ENCODE measurements at regions of chr1 and their contacts with region 1.

Region 1: GRCh38 chr1:78004719-78005447 is at the start of gene DNAJB4:
- DNase-seq: peak; percentile 95
- ATAC-seq: peak; percentile 99
- H3K4me3 ChIP-seq: peak within 1 kb of the TSS; percentile 60 to 71 (median 62); a peak in 5 of 6 replicates
- H3K27ac ChIP-seq: peak within 1 kb of the TSS; percentile 97
- H3K4me1 ChIP-seq: peaks cover 60% of the 10 kb centered on the region
- H3K27me3 ChIP-seq: no peaks in the 10 kb centered on the region
- CTCF ChIP-seq: no peak
- EP300 ChIP-seq: peak in 1 of 2 experiments; percentile 29; a peak in 1 of 4 replicates
- POLR2A ChIP-seq: peak in 1 of 2 experiments; percentile 63; a peak in 2 of 4 replicates
- RAD21 ChIP-seq: no peak
- total RNA-seq, gene DNAJB4: 18.6 and 25.7 TPM in 2 replicates

Region 2: DNA sequence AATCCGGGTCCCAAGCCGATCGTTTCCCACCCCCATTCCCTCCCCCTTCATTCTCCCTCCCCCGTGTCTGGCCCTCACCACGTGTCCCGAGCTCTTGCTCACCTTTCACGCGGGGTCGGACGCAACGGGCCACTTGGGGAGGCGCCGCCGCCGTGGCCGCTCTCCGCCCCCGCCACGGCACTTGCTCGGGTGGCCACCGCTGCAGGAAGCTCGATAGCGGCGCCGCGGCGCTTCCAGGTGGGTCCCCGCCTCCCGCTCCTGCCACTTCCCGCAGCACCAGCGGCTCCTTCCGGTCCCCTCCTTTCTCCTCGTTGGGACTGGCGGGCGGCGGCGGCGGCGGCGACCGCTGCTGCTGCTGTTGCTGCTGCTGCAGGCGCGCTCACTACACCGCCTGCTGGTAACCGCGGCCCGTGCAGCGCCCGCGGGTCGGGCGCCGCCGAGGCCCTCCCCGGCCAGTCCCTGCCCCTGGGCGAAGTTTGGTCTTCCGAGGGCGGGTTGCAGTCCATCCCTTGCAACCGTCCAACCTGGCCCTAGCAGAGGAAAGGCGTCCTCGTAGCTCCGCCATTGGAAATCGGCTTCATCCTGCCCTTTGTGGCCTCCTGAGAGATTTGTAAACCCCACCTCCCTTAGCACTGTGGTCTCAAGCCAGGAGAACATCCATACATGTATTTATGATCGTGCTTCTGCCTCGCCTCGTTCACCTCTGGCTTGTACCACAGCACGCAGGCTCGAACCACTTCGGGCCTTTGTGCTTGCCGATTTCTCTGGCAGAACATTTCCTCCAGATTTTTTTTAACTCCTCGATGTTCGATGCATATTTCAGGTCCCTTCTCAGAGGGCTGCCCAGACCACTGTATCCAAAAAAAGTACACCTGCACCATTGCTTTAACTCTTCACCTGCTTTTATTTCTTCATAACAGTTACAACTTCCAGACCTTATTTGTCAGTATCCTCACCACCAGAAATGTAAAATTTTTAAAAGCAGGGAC is 321.4 kb before region 1 on chr1:
- CTCF ChIA-PET with region 1: no interaction called
- POLR2A ChIA-PET with region 1: interaction called, 10 read pairs
- in situ Hi-C with region 1: no loop called
- intact Hi-C with region 1: no loop called
- DNase-seq: peak; percentile 85
- ATAC-seq: peak; percentile 89
- H3K4me3 ChIP-seq: peak overlapping the region; percentile 86 to 98 (median 90)
- H3K27ac ChIP-seq: peak overlapping the region; percentile 100
- H3K4me1 ChIP-seq: peaks cover 38% of the 10 kb centered on the region
- H3K27me3 ChIP-seq: no peaks in the 10 kb centered on the region; a peak in 1 of 5 replicates
- CTCF ChIP-seq: peak; percentile 89
- EP300 ChIP-seq: no peak; a peak in 1 of 4 replicates
- POLR2A ChIP-seq: peak; percentile 73 to 78
- RAD21 ChIP-seq: peak; percentile 94

Region 3: DNA sequence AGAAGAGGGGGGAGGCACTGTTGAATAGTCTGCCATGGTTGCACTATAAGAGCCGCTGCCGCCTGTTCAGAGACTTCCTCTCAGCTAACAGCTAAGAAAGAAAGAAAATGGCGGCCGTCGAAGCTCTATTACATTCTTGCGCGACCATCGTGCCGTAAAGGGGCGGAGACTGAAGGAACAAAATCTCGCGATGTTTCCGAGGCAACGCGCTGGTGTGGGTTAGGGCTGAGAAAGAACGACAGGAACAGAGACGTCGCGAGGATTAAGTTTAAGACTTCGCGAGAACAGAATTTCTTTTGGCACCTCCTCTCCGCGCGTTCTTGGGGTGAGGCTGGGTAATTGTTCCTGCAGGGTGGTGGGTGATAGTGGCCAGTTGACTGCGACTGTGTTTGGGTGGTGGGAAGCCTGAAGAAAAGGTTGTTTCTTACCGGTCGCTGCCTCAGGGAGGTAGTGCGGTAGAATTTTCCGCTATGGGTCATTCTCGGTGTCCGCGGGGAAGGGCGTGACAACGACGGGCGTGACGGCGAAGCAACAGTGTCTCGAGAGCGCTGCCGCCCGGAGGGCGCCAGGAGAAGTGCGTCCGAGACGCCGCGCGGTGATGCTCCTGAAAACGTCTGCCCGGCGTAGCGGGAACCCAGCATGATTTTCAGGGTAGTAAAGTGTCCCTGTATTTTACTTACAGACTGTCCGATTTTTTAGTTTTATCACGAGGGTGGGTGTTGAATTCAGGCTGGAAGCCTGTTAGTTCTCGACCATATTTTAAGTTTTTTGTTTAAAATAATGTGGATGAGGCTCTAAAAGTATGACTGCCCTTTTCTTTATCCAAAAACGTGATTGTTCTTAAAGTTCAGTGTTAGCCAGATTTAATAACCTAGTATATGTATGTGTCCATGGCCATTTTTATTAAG is 25.7 kb before region 1 on chr1 and contains the start of gene FUBP1:
- CTCF ChIA-PET with region 1: no interaction called
- POLR2A ChIA-PET with region 1: interaction called, 161 read pairs
- in situ Hi-C with region 1: no loop called
- intact Hi-C with region 1: loop called (anchors 1 kb)
- DNase-seq: peak; percentile 98
- ATAC-seq: peak; percentile 91
- H3K4me3 ChIP-seq: peak within 1 kb of the TSS; percentile 79 to 100 (median 90)
- H3K27ac ChIP-seq: peak within 1 kb of the TSS; percentile 99
- H3K4me1 ChIP-seq: peaks cover 61% of the 10 kb centered on the region
- H3K27me3 ChIP-seq: no peaks in the 10 kb centered on the region; a peak in 1 of 5 replicates
- CTCF ChIP-seq: peak; percentile 80
- EP300 ChIP-seq: no peak; a peak in 2 of 4 replicates
- POLR2A ChIP-seq: peak; percentile 89 to 99
- RAD21 ChIP-seq: peak; percentile 29; the same call in 1 of the 2 replicates
- total RNA-seq, gene FUBP1: 166 and 192 TPM in 2 replicates

Region 4: DNA sequence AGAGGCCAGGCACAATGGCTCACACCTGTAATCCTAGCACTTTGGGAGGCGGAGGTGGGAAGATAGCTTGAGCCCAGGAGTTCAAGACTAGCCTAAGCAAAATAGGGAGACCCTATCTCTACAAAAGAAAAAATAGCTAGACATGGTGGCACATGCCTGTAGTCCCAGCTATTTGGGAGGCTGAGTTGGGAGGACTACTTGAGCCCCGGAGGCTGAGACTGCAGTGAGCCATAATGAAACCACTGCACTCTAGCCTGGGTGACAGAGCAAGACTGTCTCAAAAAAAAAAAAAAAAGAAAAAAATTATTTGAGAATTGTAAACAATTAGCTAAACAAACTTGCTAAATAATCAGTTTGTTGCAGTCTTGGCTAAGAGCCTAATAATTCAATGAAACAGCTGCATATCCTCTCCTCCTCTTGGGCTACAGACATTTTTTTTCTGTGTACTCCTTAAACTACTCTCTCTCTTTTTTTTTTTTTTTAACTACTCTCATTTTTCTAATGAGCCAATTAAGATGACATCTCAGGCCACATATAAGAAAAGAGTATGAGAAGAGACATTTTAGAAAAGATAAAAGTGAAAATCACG is 10.7 kb before region 1 on chr1:
- CTCF ChIA-PET with region 1: no interaction called
- POLR2A ChIA-PET with region 1: interaction called, 46 read pairs
- in situ Hi-C with region 1: no loop called
- intact Hi-C with region 1: loop called (anchors 2 kb)
- DNase-seq: no peak
- ATAC-seq: no peak
- H3K4me3 ChIP-seq: no peak overlapping the region
- H3K27ac ChIP-seq: no peak overlapping the region
- H3K4me1 ChIP-seq: peaks cover 47% of the 10 kb centered on the region
- H3K27me3 ChIP-seq: no peaks in the 10 kb centered on the region
- CTCF ChIP-seq: no peak
- EP300 ChIP-seq: no peak
- POLR2A ChIP-seq: no peak
- RAD21 ChIP-seq: no peak

Region 5: GRCh38 chr1:78114034-78114956 is 109.4 kb after region 1 on chr1:
- CTCF ChIA-PET with region 1: interaction called, 3 read pairs
- POLR2A ChIA-PET with region 1: interaction called, 13 read pairs
- in situ Hi-C with region 1: no loop called
- intact Hi-C with region 1: no loop called
- DNase-seq: peak; percentile 75
- ATAC-seq: peak; percentile 87
- H3K4me3 ChIP-seq: no peak overlapping the region
- H3K27ac ChIP-seq: no peak overlapping the region
- H3K4me1 ChIP-seq: peaks cover 25% of the 10 kb centered on the region
- H3K27me3 ChIP-seq: no peaks in the 10 kb centered on the region
- CTCF ChIP-seq: peak; percentile 80
- EP300 ChIP-seq: no peak
- POLR2A ChIP-seq: no peak
- RAD21 ChIP-seq: peak; percentile 75; the same call in 1 of the 2 replicates

Measured in HepG2 (cell line).